Mammary epithelial cell (primary cell): ENCODE measurements at regions of chrX and their contacts with region 1.

Region 1: GRCh38 chrX:129606918-129607317 is 47.8 kb downstream of the APLN start:
- DNase-seq: peak; percentile 31
- H3K4me3 ChIP-seq: no peak overlapping the region
- H3K27ac ChIP-seq: no peak overlapping the region
- H3K4me1 ChIP-seq: no peaks in the 10 kb centered on the region
- H3K27me3 ChIP-seq: no peaks in the 10 kb centered on the region
- CTCF ChIP-seq: peak; percentile 72 to 89

Region 2: GRCh38 chrX:129654419-129655165 is 47.7 kb after region 1 on chrX and contains the start of gene APLN:
- CTCF ChIA-PET with region 1: interaction called, 3 read pairs
- dilution Hi-C with region 1: no loop called
- in situ Hi-C with region 1: no loop called
- intact Hi-C with region 1: loop called (anchors 1 kb)
- DNase-seq: peak; percentile 30
- H3K4me3 ChIP-seq: peak within 1 kb of the TSS in 2 of 3 experiments; percentile 33 to 41
- H3K27ac ChIP-seq: no peak within 1 kb of the TSS
- H3K4me1 ChIP-seq: peaks cover 9% of the 10 kb centered on the region
- H3K27me3 ChIP-seq: no peaks in the 10 kb centered on the region
- CTCF ChIP-seq: peak in 1 of 2 donors; percentile 8
- total RNA-seq, gene APLN: under 0.01 to 0.21 TPM

Region 3: GRCh38 chrX:129665910-129666644 is 59.2 kb after region 1 on chrX:
- CTCF ChIA-PET with region 1: no interaction called
- dilution Hi-C with region 1: no loop called
- in situ Hi-C with region 1: no loop called
- intact Hi-C with region 1: no loop called
- DNase-seq: peak; percentile 60
- H3K4me3 ChIP-seq: no peak overlapping the region
- H3K27ac ChIP-seq: peak overlapping the region; percentile 20
- H3K4me1 ChIP-seq: peaks cover 21% of the 10 kb centered on the region
- H3K27me3 ChIP-seq: no peaks in the 10 kb centered on the region
- CTCF ChIP-seq: no peak

Region 4: DNA sequence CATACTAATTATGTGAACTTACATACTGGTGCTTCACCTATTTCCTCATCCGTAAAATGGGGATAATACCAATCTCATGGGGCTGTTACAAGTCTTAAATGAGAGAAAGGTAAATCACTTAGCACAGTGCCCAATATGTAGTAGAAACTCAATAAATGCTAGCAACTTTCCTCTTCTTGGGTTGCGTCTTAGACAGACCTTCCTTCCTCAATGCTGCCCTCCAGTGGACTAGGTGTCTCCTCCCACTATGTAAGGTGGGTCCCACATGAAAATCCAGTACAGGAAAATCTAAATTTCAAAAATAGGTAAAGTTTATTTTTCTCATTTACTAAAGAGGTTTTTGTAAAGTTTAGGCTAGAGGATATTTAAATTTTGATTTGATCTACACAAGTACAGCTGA is 216.2 kb after region 1 on chrX:
- CTCF ChIA-PET with region 1: no interaction called
- dilution Hi-C with region 1: no loop called
- in situ Hi-C with region 1: no loop called
- intact Hi-C with region 1: loop called (anchors 1 kb)
- DNase-seq: peak; percentile 12
- H3K4me3 ChIP-seq: no peak overlapping the region
- H3K27ac ChIP-seq: no peak overlapping the region
- H3K4me1 ChIP-seq: no peaks in the 10 kb centered on the region
- H3K27me3 ChIP-seq: no peaks in the 10 kb centered on the region
- CTCF ChIP-seq: peak; percentile 49 to 53

Region 5: GRCh38 chrX:129843459-129844306 is 236.8 kb after region 1 on chrX and contains the start of gene ZDHHC9:
- CTCF ChIA-PET with region 1: no interaction called
- dilution Hi-C with region 1: no loop called
- in situ Hi-C with region 1: no loop called
- intact Hi-C with region 1: no loop called
- DNase-seq: peak; percentile 78
- H3K4me3 ChIP-seq: peak within 1 kb of the TSS; percentile 55 to 82 (median 66)
- H3K27ac ChIP-seq: peak within 1 kb of the TSS; percentile 34
- H3K4me1 ChIP-seq: peaks cover 3% of the 10 kb centered on the region
- H3K27me3 ChIP-seq: no peaks in the 10 kb centered on the region
- CTCF ChIP-seq: no peak
- total RNA-seq, gene ZDHHC9: 32.0 to 34.4 TPM

Region 6: GRCh38 chrX:130060122-130061069 is 453.5 kb after region 1 on chrX:
- CTCF ChIA-PET with region 1: no interaction called
- dilution Hi-C with region 1: no loop called
- in situ Hi-C with region 1: loop called (anchors 25 kb)
- intact Hi-C with region 1: loop called (anchors 1 kb)
- DNase-seq: peak; percentile 67
- H3K4me3 ChIP-seq: peak overlapping the region; percentile 41 to 48 (median 43)
- H3K27ac ChIP-seq: no peak overlapping the region
- H3K4me1 ChIP-seq: peaks cover 5% of the 10 kb centered on the region
- H3K27me3 ChIP-seq: no peaks in the 10 kb centered on the region
- CTCF ChIP-seq: peak; percentile 48 to 74

Region 7: GRCh38 chrX:130196466-130196865 is 589.5 kb after region 1 on chrX:
- CTCF ChIA-PET with region 1: no interaction called
- dilution Hi-C with region 1: no loop called
- in situ Hi-C with region 1: loop called in 1 of 2 experiments (anchors 25 kb)
- intact Hi-C with region 1: loop called (anchors 1 kb)
- DNase-seq: no peak
- H3K4me3 ChIP-seq: no peak overlapping the region
- H3K27ac ChIP-seq: no peak overlapping the region
- H3K4me1 ChIP-seq: no peaks in the 10 kb centered on the region
- H3K27me3 ChIP-seq: no peaks in the 10 kb centered on the region
- CTCF ChIP-seq: no peak